Activated CD8-positive, alpha-beta memory T cell treated with anti-CD3 and anti-CD28 coated beads, Interleukin-2, amount 10 ng/mL, durations not matched to agents 7 days and 5 days (primary cell): ENCODE measurements at regions of chr11 and their contacts with region 1.

Region 1: GRCh38 chr11:47373876-47374720 is 4.2 kb downstream of the SPI1 start:
- DNase-seq: peak; percentile 88
- ATAC-seq: peak; percentile 92
- H3K4me3 Mint-ChIP-seq: no peak overlapping the region
- H3K27ac Mint-ChIP-seq: no peak overlapping the region
- H3K4me1 Mint-ChIP-seq: no peaks in the 10 kb centered on the region
- H3K27me3 Mint-ChIP-seq: no peaks in the 10 kb centered on the region

Region 2: GRCh38 chr11:47253660-47254059 is 120.4 kb before region 1 on chr11:
- CTCF ChIA-PET with region 1: no interaction called
- DNase-seq: no peak
- ATAC-seq: no peak
- H3K4me3 Mint-ChIP-seq: no peak overlapping the region
- H3K27ac Mint-ChIP-seq: no peak overlapping the region
- H3K4me1 Mint-ChIP-seq: peaks cover 14% of the 10 kb centered on the region
- H3K27me3 Mint-ChIP-seq: no peaks in the 10 kb centered on the region

Region 3: DNA sequence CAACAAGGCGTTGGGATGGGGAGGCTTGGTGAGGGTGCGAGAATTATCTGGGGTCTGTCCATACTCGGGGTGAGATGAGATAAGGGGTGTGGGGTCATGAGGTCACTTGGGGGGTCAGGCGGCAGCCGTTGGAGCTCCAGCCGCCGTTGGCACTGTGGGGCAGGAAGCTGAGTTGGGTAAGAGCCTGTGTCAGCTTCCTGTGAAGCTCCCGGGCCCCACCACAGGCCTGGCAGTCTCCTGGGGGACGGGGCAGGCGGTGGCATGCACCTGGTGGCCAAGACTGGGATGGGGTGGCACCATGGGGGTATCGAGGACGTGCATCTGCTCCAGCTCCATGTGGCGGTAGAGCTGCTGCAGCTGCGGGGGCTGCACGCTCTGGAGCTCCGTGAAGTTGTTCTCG is 14.5 kb before region 1 on chr11:
- CTCF ChIA-PET with region 1: interaction called, 16 read pairs
- DNase-seq: no peak
- ATAC-seq: no peak
- H3K4me3 Mint-ChIP-seq: no peak overlapping the region
- H3K27ac Mint-ChIP-seq: peak overlapping the region; percentile 35
- H3K4me1 Mint-ChIP-seq: peaks cover 12% of the 10 kb centered on the region
- H3K27me3 Mint-ChIP-seq: no peaks in the 10 kb centered on the region

Region 4: DNA sequence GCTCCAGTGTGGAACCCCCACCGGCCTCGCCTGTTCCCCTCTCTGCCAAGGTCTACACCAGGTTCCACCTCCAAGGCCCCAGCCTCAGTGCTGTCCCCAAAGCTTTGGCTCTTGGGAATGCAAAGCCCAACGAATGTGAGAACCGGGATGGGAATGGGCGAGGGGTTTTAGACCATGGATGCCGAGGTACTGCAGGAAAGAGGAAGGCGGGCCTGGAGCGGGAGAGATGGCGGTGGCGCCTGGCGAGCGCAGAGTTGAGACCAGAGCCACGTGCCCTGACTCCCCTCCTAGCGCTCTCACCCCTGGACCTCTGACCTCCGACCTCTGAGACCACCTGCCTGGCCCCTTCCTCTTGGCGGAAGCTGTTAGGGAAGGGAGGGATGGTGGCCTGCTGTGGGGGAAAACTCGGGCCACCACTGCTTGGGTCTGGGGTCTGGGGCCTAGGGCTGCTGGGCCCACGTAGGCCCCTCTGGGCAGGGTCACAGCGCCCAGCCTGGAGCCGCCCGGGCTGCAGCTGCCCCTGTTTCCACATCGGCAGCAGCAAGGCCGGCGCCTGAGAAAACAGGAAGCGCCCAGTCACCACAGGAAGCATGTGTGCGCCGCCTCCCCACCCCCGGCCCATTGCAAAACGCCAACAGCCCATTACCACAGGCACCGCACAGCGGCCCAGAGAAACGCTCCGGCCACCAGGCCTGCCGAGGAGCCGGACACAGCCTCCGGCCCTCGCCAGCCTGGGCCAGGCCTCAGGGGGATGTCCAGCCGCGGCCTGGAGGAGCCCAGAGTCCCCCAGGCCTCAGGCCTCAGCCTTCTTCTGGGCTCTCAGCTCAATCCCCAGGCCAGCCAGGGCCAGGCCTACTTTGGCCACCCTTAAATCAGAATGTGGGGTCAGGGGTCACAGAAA is 20.5 kb after region 1 on chr11:
- CTCF ChIA-PET with region 1: interaction called, 53 read pairs
- DNase-seq: peak; percentile 78
- ATAC-seq: peak; percentile 86
- H3K4me3 Mint-ChIP-seq: no peak overlapping the region
- H3K27ac Mint-ChIP-seq: peak overlapping the region; percentile 86
- H3K4me1 Mint-ChIP-seq: peaks cover 29% of the 10 kb centered on the region
- H3K27me3 Mint-ChIP-seq: no peaks in the 10 kb centered on the region

Region 5: DNA sequence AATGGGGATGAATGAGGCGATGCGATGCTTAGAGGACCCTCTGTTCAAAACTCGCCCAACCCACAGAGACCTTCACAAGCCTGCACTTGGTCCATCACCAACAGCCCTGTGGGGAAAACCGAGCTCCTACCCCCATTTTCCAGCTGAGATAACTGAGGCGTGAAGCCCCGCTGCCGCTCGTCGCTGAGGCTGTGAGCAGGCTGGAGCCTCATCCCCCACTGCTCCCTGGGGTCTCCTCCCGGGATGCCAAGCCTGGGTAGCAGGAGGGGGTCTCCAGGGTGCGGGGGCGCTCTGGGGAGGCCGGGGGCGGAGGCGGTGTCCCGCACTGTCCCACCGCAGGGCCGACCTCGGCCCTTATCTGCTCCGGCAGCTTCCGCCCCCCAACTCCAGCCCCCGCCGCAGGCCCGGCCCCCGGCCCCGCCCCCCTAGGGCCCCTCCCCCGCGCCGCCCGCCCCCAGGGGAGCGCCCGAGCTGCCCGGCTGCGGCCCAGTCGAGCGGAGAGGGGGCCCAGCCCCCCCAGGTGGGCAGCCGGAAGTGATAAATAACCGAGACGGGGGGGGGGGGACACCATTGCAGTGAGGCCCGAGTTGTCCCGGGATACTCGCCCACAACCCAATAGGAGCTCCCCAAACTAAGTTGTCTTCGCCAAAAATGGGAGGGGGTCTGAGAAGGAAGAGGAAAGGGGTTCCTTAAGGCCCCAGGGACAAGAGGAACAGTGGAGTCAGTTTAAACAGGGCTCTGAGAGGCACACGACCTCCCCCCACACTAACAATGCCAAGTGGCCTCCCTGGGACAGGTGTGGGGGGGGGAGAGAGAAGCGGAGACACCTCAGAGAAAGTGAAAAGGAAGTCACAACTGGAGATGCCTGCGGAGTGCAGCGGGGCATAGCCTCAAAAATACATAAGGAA is 26.0 kb after region 1 on chr11:
- CTCF ChIA-PET with region 1: interaction called, 34 read pairs
- DNase-seq: no peak
- ATAC-seq: peak; percentile 87
- H3K4me3 Mint-ChIP-seq: peak overlapping the region; percentile 66
- H3K27ac Mint-ChIP-seq: peak overlapping the region; percentile 59
- H3K4me1 Mint-ChIP-seq: peaks cover 15% of the 10 kb centered on the region
- H3K27me3 Mint-ChIP-seq: no peaks in the 10 kb centered on the region

Region 6: GRCh38 chr11:47407746-47408590 is 33.9 kb after region 1 on chr11 and contains the start of gene SLC39A13:
- CTCF ChIA-PET with region 1: interaction called, 125 read pairs
- DNase-seq: peak; percentile 93
- ATAC-seq: peak; percentile 89
- H3K4me3 Mint-ChIP-seq: peak within 1 kb of the TSS; percentile 80
- H3K27ac Mint-ChIP-seq: peak within 1 kb of the TSS; percentile 87
- H3K4me1 Mint-ChIP-seq: peaks cover 19% of the 10 kb centered on the region
- H3K27me3 Mint-ChIP-seq: no peaks in the 10 kb centered on the region
- total RNA-seq, gene SLC39A13: 18.2 to 22.1 TPM

Region 7: GRCh38 chr11:47454180-47454644 is 80.1 kb after region 1 on chr11:
- CTCF ChIA-PET with region 1: interaction called, 24 read pairs
- DNase-seq: peak; percentile 85
- ATAC-seq: peak; percentile 88
- H3K4me3 Mint-ChIP-seq: no peak overlapping the region
- H3K27ac Mint-ChIP-seq: no peak overlapping the region
- H3K4me1 Mint-ChIP-seq: peaks cover 4% of the 10 kb centered on the region
- H3K27me3 Mint-ChIP-seq: no peaks in the 10 kb centered on the region